Naive thymus-derived CD4-positive, alpha-beta T cell (primary cell): ENCODE measurements at regions of chr11 and their contacts with region 1.

Region 1: DNA sequence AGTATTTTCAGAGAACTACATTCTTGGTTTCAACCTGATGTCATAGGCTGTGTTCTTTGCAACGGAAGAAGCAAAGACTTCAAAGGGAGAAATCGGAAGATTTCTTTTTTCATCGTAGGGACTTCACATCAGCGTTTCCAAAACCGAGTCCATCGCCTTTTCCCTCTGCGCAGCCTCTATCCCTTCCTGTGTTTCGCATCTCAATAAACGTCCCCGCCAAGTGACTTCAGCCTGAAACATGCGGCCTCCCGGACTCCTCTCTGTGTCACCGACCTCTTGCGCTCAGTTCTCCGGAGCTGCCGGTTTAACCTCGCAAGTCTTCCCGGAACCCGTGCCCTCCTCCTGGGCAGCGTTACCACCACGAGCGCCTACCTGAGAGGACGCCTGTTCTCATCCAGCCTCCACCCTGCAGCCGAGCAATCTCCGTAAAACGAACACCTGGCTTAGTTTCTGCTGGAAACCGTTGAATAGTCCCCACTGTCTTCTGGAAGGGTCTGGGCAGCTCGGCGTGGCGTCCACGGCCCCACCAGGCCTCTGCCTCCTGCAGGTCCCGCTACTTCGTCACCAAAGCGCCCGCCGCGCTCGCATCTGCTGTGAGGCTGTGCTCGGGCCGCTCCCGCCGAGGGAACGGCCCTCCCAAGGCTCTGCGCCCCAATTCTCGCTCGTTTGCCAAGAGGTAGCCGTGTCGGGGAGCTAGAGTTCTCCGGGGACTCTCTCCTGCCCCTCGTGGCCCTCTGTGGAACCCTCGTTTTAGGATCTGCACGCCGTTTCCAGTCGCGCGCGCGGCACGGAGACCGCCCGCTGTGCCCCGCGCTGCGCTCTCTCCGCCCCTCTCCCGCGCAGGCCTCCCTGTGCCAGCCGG is at the start of gene GLB1L3:
- DNase-seq: peak; percentile 58 to 81 (median 79)
- ATAC-seq: peak; percentile 94
- H3K4me3 ChIP-seq: peak within 1 kb of the TSS; percentile 93
- H3K4me3 Mint-ChIP-seq: peak within 1 kb of the TSS; percentile 90 to 99 (median 95)
- H3K27ac ChIP-seq: peak within 1 kb of the TSS; percentile 69
- H3K27ac Mint-ChIP-seq: peak within 1 kb of the TSS; percentile 66 to 94 (median 92)
- H3K4me1 ChIP-seq: peaks cover 21 to 31% of the 10 kb centered on the region in 2 donors
- H3K4me1 Mint-ChIP-seq: peaks cover 26 to 54% (median 50%) of the 10 kb centered on the region in 7 donors
- H3K27me3 ChIP-seq: no peaks in the 10 kb centered on the region
- H3K27me3 Mint-ChIP-seq: peaks cover 0 to 11% (median 4%) of the 10 kb centered on the region in 5 donors
- total RNA-seq, gene GLB1L3: 1.0 to 11.4 (median 2.5) TPM

Region 2: DNA sequence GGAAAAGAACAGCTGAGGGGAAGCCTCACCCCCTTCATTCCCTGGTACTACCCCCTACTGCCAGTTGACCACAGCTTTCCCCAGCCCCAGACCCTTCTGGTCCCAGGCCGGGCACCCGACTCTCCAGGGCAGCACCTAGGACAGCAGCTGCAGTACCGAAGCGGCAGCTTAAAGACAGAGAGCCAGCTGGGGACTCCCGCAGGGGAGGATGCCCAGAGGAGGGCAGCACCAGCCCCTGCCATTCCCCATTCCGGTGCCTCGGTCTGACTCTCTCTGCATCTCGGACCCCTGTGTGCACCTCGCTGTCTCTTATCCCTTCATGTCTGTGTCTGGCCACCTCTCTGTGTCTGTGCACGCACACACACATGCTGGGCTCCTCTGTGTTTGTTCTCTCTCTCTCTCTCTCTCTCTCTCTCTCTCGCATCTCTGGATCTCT is 328.4 kb before region 1 on chr11:
- CTCF ChIA-PET with region 1: no interaction called
- POLR2A ChIA-PET with region 1: interaction called, 3 read pairs
- intact Hi-C with region 1: loop called in 1 of 2 experiments (anchors 5 kb)
- DNase-seq: peak; percentile 49 to 76 (median 74)
- ATAC-seq: peak; percentile 66
- H3K4me3 ChIP-seq: peak overlapping the region; percentile 39
- H3K4me3 Mint-ChIP-seq: peak overlapping the region; percentile 50 to 97 (median 76)
- H3K27ac ChIP-seq: peak overlapping the region; percentile 44
- H3K27ac Mint-ChIP-seq: peak overlapping the region; percentile 60 to 94 (median 85)
- H3K4me1 ChIP-seq: peaks cover 50 to 60% of the 10 kb centered on the region in 2 donors
- H3K4me1 Mint-ChIP-seq: peaks cover 41 to 76% (median 64%) of the 10 kb centered on the region in 7 donors
- H3K27me3 ChIP-seq: no peaks in the 10 kb centered on the region
- H3K27me3 Mint-ChIP-seq: no peaks in the 10 kb centered on the region

Region 3: GRCh38 chr11:134068829-134069425 is 206.8 kb before region 1 on chr11 and contains the start of gene JAM3:
- CTCF ChIA-PET with region 1: no interaction called
- POLR2A ChIA-PET with region 1: no interaction called
- intact Hi-C with region 1: loop called in 1 of 2 experiments (anchors 5 kb)
- DNase-seq: peak; percentile 95 to 97 (median 96)
- ATAC-seq: peak; percentile 95
- H3K4me3 ChIP-seq: peak within 1 kb of the TSS; percentile 71
- H3K4me3 Mint-ChIP-seq: peak within 1 kb of the TSS; percentile 84 to 97 (median 92)
- H3K27ac ChIP-seq: peak within 1 kb of the TSS; percentile 71
- H3K27ac Mint-ChIP-seq: peak within 1 kb of the TSS; percentile 59 to 96 (median 89)
- H3K4me1 ChIP-seq: peaks cover 6% of the 10 kb centered on the region in 2 donors
- H3K4me1 Mint-ChIP-seq: peaks cover 5 to 22% (median 13%) of the 10 kb centered on the region in 7 donors
- H3K27me3 ChIP-seq: no peaks in the 10 kb centered on the region
- H3K27me3 Mint-ChIP-seq: peaks cover 0 to 80% (median 6%) of the 10 kb centered on the region in 5 donors
- total RNA-seq, gene JAM3: 4.8 to 8.2 (median 6.3) TPM

Region 4: DNA sequence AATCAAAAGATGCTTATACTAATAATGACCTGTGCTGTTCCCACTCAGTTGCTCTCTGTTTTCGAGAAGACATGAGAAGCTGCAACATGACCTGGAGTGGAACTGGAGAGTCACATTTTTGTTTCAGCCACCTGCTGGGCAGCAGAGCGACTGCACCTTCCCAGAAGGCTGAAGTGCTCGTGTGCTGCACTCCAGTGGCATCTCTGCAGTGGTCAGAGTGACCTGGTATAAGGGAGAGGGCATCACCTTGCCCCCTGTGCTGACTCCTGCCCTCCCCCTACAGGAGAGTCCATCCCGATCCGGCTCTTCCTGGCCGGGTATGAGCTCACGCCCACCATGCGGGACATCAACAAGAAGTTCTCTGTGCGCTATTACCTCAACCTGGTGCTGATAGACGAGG is 31.1 kb before region 1 on chr11:
- CTCF ChIA-PET with region 1: interaction called, 5 read pairs
- POLR2A ChIA-PET with region 1: no interaction called
- intact Hi-C with region 1: loop called in 1 of 2 experiments (anchors 5 kb)
- DNase-seq: peak in 4 of 9 donors; percentile 16 to 41 (median 21)
- ATAC-seq: peak; percentile 63
- H3K4me3 ChIP-seq: no peak overlapping the region
- H3K4me3 Mint-ChIP-seq: no peak overlapping the region
- H3K27ac ChIP-seq: no peak overlapping the region
- H3K27ac Mint-ChIP-seq: peak overlapping the region in 2 of 9 donors; percentile 19 to 43
- H3K4me1 ChIP-seq: no peaks in the 10 kb centered on the region
- H3K4me1 Mint-ChIP-seq: peaks cover 0 to 9% (median 0%) of the 10 kb centered on the region in 7 donors
- H3K27me3 ChIP-seq: no peaks in the 10 kb centered on the region
- H3K27me3 Mint-ChIP-seq: no peaks in the 10 kb centered on the region

Region 5: GRCh38 chr11:134261626-134262488 is 13.9 kb before region 1 on chr11:
- CTCF ChIA-PET with region 1: interaction called, 4 read pairs
- POLR2A ChIA-PET with region 1: interaction called, 5 read pairs
- intact Hi-C with region 1: loop called (anchors 1 kb)
- DNase-seq: peak in 6 of 9 donors; percentile 37 to 49 (median 48)
- ATAC-seq: peak; percentile 74
- H3K4me3 ChIP-seq: no peak overlapping the region
- H3K4me3 Mint-ChIP-seq: no peak overlapping the region
- H3K27ac ChIP-seq: no peak overlapping the region
- H3K27ac Mint-ChIP-seq: peak overlapping the region in 1 of 9 donors; percentile 14
- H3K4me1 ChIP-seq: no peaks in the 10 kb centered on the region
- H3K4me1 Mint-ChIP-seq: peaks cover 0 to 32% (median 3%) of the 10 kb centered on the region in 7 donors
- H3K27me3 ChIP-seq: no peaks in the 10 kb centered on the region
- H3K27me3 Mint-ChIP-seq: no peaks in the 10 kb centered on the region

Region 6: GRCh38 chr11:134343646-134344045 is 67.9 kb after region 1 on chr11:
- CTCF ChIA-PET with region 1: no interaction called
- POLR2A ChIA-PET with region 1: no interaction called
- intact Hi-C with region 1: loop called in 1 of 2 experiments (anchors 1 kb)
- DNase-seq: peak in 1 of 9 donors; percentile 10
- ATAC-seq: no peak
- H3K4me3 ChIP-seq: no peak overlapping the region
- H3K4me3 Mint-ChIP-seq: no peak overlapping the region
- H3K27ac ChIP-seq: no peak overlapping the region
- H3K27ac Mint-ChIP-seq: no peak overlapping the region
- H3K4me1 ChIP-seq: peaks cover 0 to under 1% of the 10 kb centered on the region in 2 donors
- H3K4me1 Mint-ChIP-seq: peaks cover 0 to 5% (median 0%) of the 10 kb centered on the region in 7 donors
- H3K27me3 ChIP-seq: no peaks in the 10 kb centered on the region
- H3K27me3 Mint-ChIP-seq: no peaks in the 10 kb centered on the region

Region 7: GRCh38 chr11:134466156-134466555 is 190.4 kb after region 1 on chr11:
- CTCF ChIA-PET with region 1: no interaction called
- POLR2A ChIA-PET with region 1: no interaction called
- intact Hi-C with region 1: no loop called
- DNase-seq: no peak
- ATAC-seq: no peak
- H3K4me3 ChIP-seq: no peak overlapping the region
- H3K4me3 Mint-ChIP-seq: no peak overlapping the region
- H3K27ac ChIP-seq: no peak overlapping the region
- H3K27ac Mint-ChIP-seq: no peak overlapping the region
- H3K4me1 ChIP-seq: no peaks in the 10 kb centered on the region
- H3K4me1 Mint-ChIP-seq: peaks cover 0 to 1% (median 0%) of the 10 kb centered on the region in 7 donors
- H3K27me3 ChIP-seq: no peaks in the 10 kb centered on the region
- H3K27me3 Mint-ChIP-seq: peaks cover 32 to 55% (median 39%) of the 10 kb centered on the region in 5 donors